Ascending aorta (tissue), 2 donors: ENCODE measurements at regions of chr17 and their contacts with region 1.

Region 1: DNA sequence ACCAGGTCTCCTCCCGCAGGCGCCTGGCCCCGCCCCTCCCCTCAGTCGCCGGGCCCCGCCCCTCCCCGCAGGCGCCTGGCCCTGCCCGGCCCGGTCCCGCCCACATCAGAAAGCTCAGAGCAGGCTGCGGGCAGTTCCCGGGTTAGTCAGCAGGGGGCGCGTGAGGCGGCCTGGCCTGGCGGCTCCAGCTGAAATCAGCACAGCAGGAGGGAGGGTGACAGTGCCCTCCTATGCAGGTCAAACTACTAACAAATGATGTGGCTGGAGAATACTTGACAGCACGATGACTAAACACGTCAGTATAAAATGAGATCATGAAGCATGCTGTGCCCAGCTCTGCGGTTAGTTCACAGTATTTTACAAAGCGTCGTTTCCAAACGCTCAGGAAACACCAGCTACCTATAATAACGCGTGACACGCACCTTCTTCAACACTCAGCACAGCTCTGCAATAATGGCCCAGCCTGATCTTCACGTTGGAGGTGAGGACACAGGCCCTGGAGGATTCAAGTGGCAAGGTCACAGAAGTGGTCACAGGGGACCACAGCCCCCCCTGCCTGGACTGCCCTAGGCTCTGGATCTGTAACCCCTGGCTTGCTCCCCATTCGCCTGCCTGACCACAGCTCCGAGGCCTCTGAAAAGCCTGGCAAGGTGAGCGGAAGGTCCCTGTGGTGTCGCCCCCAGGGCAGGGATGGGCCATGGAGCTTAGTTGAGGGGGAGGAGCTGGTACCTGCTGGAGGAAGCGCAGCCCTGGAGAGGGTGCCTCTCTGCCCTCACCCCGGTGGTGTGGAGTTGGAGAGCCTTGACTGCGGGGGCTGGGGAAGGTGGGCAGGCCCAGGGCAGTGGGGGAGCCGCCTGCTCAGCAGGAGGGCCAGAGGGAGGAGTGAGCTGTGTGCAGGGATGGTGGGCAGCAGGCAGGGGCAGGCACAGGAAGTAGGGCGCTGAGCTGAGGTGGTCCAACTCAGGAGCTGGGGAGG is 81.2 kb downstream of the KCNJ12 start:
- DNase-seq: peak; percentile 54 to 95
- H3K4me3 ChIP-seq: no peak overlapping the region
- H3K27ac ChIP-seq: no peak overlapping the region
- H3K4me1 ChIP-seq: peaks cover 3 to 9% of the 10 kb centered on the region in 2 donors
- H3K27me3 ChIP-seq: no peaks in the 10 kb centered on the region
- CTCF ChIP-seq: peak; percentile 78 to 99 (median 99)

Region 2: DNA sequence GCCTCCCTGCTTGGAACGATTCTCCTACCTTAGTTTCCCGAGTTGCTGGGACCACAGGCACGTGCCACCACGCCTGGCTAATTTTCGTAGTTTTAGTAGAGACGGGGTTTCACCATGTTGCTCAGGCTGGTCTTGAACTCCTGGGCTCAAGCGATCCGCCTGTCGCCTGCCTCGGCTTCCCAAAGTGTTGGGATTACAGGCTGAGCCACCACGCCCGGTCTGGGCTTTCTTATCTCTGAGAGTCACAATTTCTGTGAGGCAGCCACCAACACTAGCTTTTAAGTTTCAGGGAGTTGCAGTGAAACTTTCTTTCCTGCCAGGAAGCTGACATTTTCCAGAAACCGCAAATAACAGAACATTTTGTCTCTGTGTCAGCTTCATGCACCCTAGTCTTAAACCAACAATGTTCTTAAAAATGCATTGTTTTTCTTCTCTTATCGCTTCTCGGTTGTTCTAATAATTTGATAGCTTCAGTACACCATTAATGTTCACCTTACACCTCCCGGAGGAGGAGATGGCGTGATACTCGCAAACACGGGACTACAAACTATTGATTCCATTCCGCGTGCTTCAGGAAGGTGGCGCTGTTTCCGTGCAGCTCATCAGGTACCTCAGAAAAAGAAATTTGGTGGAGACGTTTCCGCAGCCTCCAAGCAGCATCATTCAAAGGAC is 338.0 kb before region 1 on chr17:
- intact Hi-C with region 1: loop called (anchors 5 kb)
- DNase-seq: peak; percentile 16 to 90
- H3K4me3 ChIP-seq: peak overlapping the region; percentile 10 to 30
- H3K27ac ChIP-seq: peak overlapping the region; percentile 44 to 57
- H3K4me1 ChIP-seq: peaks cover 0 to 6% of the 10 kb centered on the region in 2 donors
- H3K27me3 ChIP-seq: no peaks in the 10 kb centered on the region
- CTCF ChIP-seq: peak; percentile 73 to 86 (median 86)

Region 3: DNA sequence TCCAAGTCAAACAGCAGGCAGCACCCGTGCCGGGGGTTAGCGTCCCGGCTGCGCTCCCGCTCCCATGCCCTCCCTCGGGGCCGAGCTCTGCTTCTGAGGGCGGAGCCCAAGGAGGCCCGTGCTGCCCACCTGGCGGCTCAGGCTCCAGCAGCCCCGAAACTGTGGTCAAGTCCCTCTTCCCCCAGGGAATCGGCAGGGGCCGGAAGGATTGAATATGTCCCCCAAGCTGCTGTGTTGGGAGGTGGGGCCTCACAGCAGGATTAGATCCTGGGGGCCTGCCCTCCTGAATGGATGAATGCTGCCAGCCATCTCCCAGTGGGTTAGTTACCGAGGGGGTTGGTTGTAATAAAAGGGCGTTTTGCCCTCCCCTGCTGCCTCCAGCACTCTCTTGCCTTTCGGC is 138.9 kb before region 1 on chr17:
- intact Hi-C with region 1: loop called (anchors 5 kb)
- DNase-seq: peak in 1 of 2 donors; percentile 66
- H3K4me3 ChIP-seq: no peak overlapping the region
- H3K27ac ChIP-seq: no peak overlapping the region
- H3K4me1 ChIP-seq: peaks cover 0 to 2% of the 10 kb centered on the region in 2 donors
- H3K27me3 ChIP-seq: no peaks in the 10 kb centered on the region
- CTCF ChIP-seq: no peak

Region 4: GRCh38 chr17:21511363-21512198 is 54.2 kb after region 1 on chr17:
- intact Hi-C with region 1: loop called (anchors 1 kb)
- DNase-seq: peak; percentile 21 to 91
- H3K4me3 ChIP-seq: peak overlapping the region; percentile 70 to 74
- H3K27ac ChIP-seq: peak overlapping the region; percentile 45 to 49
- H3K4me1 ChIP-seq: peaks cover 0 to 7% of the 10 kb centered on the region in 2 donors
- H3K27me3 ChIP-seq: no peaks in the 10 kb centered on the region
- CTCF ChIP-seq: peak; percentile 35 to 81 (median 80)